ENCODE measurements at regions of chr5 and their contacts with region 1.

Region 1: GRCh38 chr5:122492664-122493063 is 180.6 kb downstream of the SNCAIP start:
- DNase-seq: no peak
- ATAC-seq: peak; percentile 68
- H3K4me3 ChIP-seq: no peak overlapping the region
- H3K27ac ChIP-seq: no peak overlapping the region
- H3K4me1 ChIP-seq: no peaks in the 10 kb centered on the region
- H3K27me3 ChIP-seq: peaks cover 0 to 3% of the 10 kb centered on the region in 2 experiments; a peak in 1 of 4 replicates
- CTCF ChIP-seq: peak; percentile 23 to 52 (median 36); a peak in 5 of 6 replicates
- EP300 ChIP-seq: no peak
- POLR2A ChIP-seq: no peak
- RAD21 ChIP-seq: peak; percentile 70

Region 2: DNA sequence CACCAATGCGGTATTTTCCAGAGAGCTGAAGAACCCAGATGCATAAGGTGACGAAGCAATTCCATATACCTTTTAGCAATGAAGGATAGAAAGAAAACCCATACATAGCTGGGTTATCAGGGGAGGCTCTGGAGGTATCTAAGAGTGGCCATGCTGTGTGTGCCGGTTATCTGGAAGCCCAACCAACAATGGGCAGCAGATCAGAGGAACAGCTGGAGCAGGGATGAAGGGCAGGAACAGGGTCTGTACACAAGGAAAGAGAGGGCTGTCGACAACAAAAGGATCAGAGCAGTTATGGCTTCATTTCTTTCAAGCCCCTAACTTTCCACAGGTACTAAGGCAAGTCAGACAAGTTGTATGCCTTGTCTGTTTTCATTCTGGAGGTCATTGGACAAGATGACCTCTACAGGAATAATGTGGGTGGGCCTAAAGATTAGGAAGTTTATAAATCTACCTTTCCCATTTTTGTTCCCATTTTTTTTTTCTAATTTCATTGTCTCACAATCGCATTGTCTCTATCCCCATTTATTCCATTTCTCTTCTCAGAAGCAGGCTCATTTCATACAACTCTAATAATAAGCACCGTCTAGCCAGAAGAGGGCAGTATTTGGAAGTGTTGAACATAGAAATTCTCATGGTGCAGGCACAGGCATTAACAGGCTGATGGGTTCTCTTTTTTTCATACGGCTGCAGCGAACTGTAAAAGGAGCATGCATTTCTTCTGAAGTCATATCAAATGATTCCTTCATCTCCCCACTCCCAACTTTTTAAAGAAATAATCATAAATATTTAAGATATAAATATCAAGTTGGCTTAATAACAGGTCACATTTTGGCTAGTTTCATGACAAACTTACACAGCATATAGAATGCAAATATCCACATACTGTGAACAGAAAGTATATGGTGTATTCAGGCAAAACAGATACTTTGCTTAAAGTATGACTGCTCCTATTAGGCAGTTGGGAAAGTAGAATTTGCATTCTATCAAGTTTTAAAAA is 299.9 kb before region 1 on chr5:
- CTCF ChIA-PET with region 1: interaction called, 3 read pairs
- POLR2A ChIA-PET with region 1: no interaction called
- RAD21 ChIA-PET with region 1: interaction called, 4 read pairs
- SMC1A ChIA-PET with region 1: interaction called, 4 read pairs
- in situ Hi-C with region 1: no loop called
- intact Hi-C with region 1: loop called (anchors 1 kb)
- DNase-seq: peak; percentile 11
- ATAC-seq: peak; percentile 95
- H3K4me3 ChIP-seq: no peak overlapping the region
- H3K27ac ChIP-seq: no peak overlapping the region
- H3K4me1 ChIP-seq: no peaks in the 10 kb centered on the region
- H3K27me3 ChIP-seq: no peaks in the 10 kb centered on the region; a peak in 2 of 4 replicates
- CTCF ChIP-seq: peak; percentile 56 to 65 (median 58)
- EP300 ChIP-seq: no peak
- POLR2A ChIP-seq: no peak
- RAD21 ChIP-seq: peak; percentile 89

Region 3: GRCh38 chr5:122341087-122341486 is 151.6 kb before region 1 on chr5:
- CTCF ChIA-PET with region 1: no interaction called
- POLR2A ChIA-PET with region 1: no interaction called
- RAD21 ChIA-PET with region 1: no interaction called
- SMC1A ChIA-PET with region 1: no interaction called
- in situ Hi-C with region 1: no loop called
- intact Hi-C with region 1: no loop called
- DNase-seq: no peak
- ATAC-seq: peak; percentile 54; the same call in 2 of the 3 replicates
- H3K4me3 ChIP-seq: no peak overlapping the region
- H3K27ac ChIP-seq: no peak overlapping the region
- H3K4me1 ChIP-seq: no peaks in the 10 kb centered on the region
- H3K27me3 ChIP-seq: no peaks in the 10 kb centered on the region
- CTCF ChIP-seq: no peak
- EP300 ChIP-seq: no peak
- POLR2A ChIP-seq: no peak
- RAD21 ChIP-seq: no peak